Panc1 (cell line): ENCODE measurements at regions of chr4 and their contacts with region 1.

Region 1: GRCh38 chr4:94304365-94304971 is 38.2 kb downstream of the HPGDS start:
- DNase-seq: peak; percentile 8
- ATAC-seq: no peak
- H3K4me3 ChIP-seq: no peak overlapping the region
- H3K27ac ChIP-seq: no peak overlapping the region
- H3K4me1 ChIP-seq: no peaks in the 10 kb centered on the region
- H3K27me3 ChIP-seq: no peaks in the 10 kb centered on the region
- CTCF ChIP-seq: peak; percentile 58; the same call in 1 of the 2 replicates

Region 2: GRCh38 chr4:94390804-94391410 is 86.4 kb after region 1 on chr4:
- CTCF ChIA-PET with region 1: no interaction called
- POLR2A ChIA-PET with region 1: no interaction called
- in situ Hi-C with region 1: no loop called
- intact Hi-C with region 1: loop called (anchors 2 kb)
- DNase-seq: no peak
- ATAC-seq: no peak
- H3K4me3 ChIP-seq: no peak overlapping the region
- H3K27ac ChIP-seq: no peak overlapping the region
- H3K4me1 ChIP-seq: no peaks in the 10 kb centered on the region
- H3K27me3 ChIP-seq: 0 out of 2 replicates have a peak, but pooled peaks cover 2% of the 10 kb centered on the region
- CTCF ChIP-seq: peak; percentile 45; the same call in 1 of the 2 replicates

Region 3: DNA sequence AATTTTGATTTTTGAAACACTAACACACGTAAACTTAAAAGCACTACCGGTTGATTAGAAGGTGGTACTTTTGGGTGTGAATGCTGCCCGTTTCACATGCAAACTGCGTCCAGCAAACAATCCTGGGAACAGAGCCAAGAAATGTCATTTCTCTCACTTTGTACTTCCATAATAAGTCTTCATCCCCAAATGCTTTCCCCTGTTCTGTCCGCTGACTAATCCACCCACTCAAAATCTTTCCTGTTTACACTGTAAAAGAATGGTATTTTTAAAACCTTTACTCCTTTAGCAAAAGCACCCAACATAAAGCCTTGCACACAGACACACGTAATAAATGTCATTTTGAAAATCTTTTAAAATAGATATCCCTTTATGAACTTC is 108.2 kb after region 1 on chr4:
- CTCF ChIA-PET with region 1: no interaction called
- POLR2A ChIA-PET with region 1: no interaction called
- in situ Hi-C with region 1: no loop called
- intact Hi-C with region 1: no loop called
- DNase-seq: no peak
- ATAC-seq: no peak
- H3K4me3 ChIP-seq: no peak overlapping the region
- H3K27ac ChIP-seq: no peak overlapping the region
- H3K4me1 ChIP-seq: no peaks in the 10 kb centered on the region
- H3K27me3 ChIP-seq: no peaks in the 10 kb centered on the region
- CTCF ChIP-seq: no peak